Endothelial cell of umbilical vein (primary cell): ENCODE measurements at regions of chr12 and their contacts with region 1.

Region 1: GRCh38 chr12:41367726-41368405 is 179.7 kb downstream of the PDZRN4 start:
- DNase-seq: no peak
- H3K4me3 ChIP-seq: no peak overlapping the region
- H3K27ac ChIP-seq: no peak overlapping the region
- H3K4me1 ChIP-seq: no peaks in the 10 kb centered on the region
- H3K27me3 ChIP-seq: no peaks in the 10 kb centered on the region
- CTCF ChIP-seq: peak; percentile 28
- POLR2A ChIP-seq: no peak

Region 2: DNA sequence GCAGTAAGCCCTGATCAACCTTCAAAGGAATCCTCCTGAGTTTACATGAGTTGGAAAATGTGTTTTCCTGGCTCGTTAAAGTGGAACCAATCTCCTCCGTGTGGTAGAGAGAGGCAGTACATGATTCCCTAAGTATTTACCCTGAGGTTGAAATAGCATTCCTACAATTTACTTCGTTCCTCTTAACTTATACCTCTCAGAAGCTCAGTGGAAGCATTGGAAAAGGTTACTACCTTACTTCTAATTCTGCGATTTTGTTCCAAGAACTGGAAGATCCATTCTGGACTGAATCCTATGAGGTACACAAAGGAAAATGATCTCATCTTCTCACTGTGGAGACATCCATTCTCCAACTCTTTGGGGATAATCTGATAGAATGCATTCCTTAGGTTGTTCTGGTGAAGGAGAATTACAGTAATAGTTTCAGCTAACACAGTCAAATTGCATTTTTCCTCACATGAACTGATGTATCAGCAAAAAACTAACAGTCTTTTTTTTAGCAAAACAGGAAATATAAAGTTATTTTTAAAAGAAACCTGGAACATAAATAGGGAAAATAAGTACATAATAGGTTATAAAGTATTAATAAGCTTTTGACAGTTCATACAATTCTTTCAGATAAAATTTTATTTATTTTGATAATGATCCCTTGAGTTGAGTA is 295.9 kb after region 1 on chr12:
- CTCF ChIA-PET with region 1: interaction called, 3 read pairs
- POLR2A ChIA-PET with region 1: no interaction called
- dilution Hi-C with region 1: no loop called
- intact Hi-C with region 1: loop called (anchors 1 kb)
- DNase-seq: peak; percentile 50
- H3K4me3 ChIP-seq: no peak overlapping the region
- H3K27ac ChIP-seq: no peak overlapping the region
- H3K4me1 ChIP-seq: no peaks in the 10 kb centered on the region
- H3K27me3 ChIP-seq: no peaks in the 10 kb centered on the region
- CTCF ChIP-seq: peak; percentile 35 to 43
- POLR2A ChIP-seq: no peak